HEK293 (cell line): ENCODE measurements at regions of chr4 and their contacts with region 1.

Region 1: DNA sequence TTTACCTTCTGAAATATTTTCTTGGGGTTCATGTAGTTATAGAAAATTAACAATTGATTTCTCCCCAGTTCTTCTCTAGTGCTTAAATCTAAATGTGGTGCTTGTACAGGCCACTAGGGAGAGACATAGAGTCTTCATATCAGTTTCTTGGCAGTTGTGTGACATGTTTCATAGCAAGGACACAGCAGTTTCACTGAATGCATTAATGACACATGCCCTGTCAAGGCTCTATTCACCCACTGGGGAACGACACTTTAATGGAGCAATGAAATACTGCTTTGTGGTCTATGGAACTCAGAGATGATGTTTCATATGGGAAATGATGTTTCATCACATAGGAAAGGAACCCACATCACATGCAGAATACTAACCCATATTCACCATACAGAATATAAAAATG is 2.8 kb downstream of the VEGFC start:
- H3K4me3 ChIP-seq: no peak overlapping the region
- H3K27ac ChIP-seq: no peak overlapping the region
- H3K4me1 ChIP-seq: peaks cover 3% of the 10 kb centered on the region; the same call in 1 of the 2 replicates
- CTCF ChIP-seq: no peak

Region 2: GRCh38 chr4:176883681-176884418 is 93.9 kb after region 1 on chr4:
- CTCF ChIA-PET with region 1: no interaction called
- POLR2A ChIA-PET with region 1: interaction called, 10 read pairs
- H3K4me3 ChIP-seq: no peak overlapping the region; the same call in 1 of the 2 replicates
- H3K27ac ChIP-seq: peak overlapping the region; percentile 85
- H3K4me1 ChIP-seq: no peaks in the 10 kb centered on the region; the same call in 1 of the 2 replicates
- CTCF ChIP-seq: no peak